ENCODE measurements at regions of chr9 and their contacts with region 1.

Region 1: GRCh38 chr9:126985870-126986498 is 71.4 kb downstream of the RALGPS1 start:
- DNase-seq: peak; percentile 71 to 97 (median 81)
- ATAC-seq: peak; percentile 81
- H3K4me3 ChIP-seq: peak overlapping the region; percentile 12
- H3K4me3 Mint-ChIP-seq: peak overlapping the region; percentile 65
- H3K27ac ChIP-seq: no peak overlapping the region
- H3K27ac Mint-ChIP-seq: peak overlapping the region; percentile 80
- H3K4me1 ChIP-seq: peaks cover 61% of the 10 kb centered on the region
- H3K4me1 Mint-ChIP-seq: peaks cover 59% of the 10 kb centered on the region
- H3K27me3 ChIP-seq: peaks cover 24 to 29% of the 10 kb centered on the region in 2 experiments
- H3K27me3 Mint-ChIP-seq: peaks cover 88% of the 10 kb centered on the region
- CTCF ChIP-seq: peak; percentile 22

Region 2: GRCh38 chr9:126939821-126940221 is 46.2 kb before region 1 on chr9:
- CTCF ChIA-PET with region 1: interaction called, 10 read pairs
- POLR2A ChIA-PET with region 1: interaction called, 5 read pairs
- intact Hi-C with region 1: no loop called
- DNase-seq: no peak
- ATAC-seq: no peak
- H3K4me3 ChIP-seq: no peak overlapping the region
- H3K4me3 Mint-ChIP-seq: no peak overlapping the region
- H3K27ac ChIP-seq: no peak overlapping the region
- H3K27ac Mint-ChIP-seq: no peak overlapping the region
- H3K4me1 ChIP-seq: peaks cover 2% of the 10 kb centered on the region
- H3K4me1 Mint-ChIP-seq: peaks cover 6% of the 10 kb centered on the region
- H3K27me3 ChIP-seq: peaks cover 3 to 4% of the 10 kb centered on the region in 2 experiments
- H3K27me3 Mint-ChIP-seq: peaks cover 13% of the 10 kb centered on the region
- CTCF ChIP-seq: no peak

Region 3: DNA sequence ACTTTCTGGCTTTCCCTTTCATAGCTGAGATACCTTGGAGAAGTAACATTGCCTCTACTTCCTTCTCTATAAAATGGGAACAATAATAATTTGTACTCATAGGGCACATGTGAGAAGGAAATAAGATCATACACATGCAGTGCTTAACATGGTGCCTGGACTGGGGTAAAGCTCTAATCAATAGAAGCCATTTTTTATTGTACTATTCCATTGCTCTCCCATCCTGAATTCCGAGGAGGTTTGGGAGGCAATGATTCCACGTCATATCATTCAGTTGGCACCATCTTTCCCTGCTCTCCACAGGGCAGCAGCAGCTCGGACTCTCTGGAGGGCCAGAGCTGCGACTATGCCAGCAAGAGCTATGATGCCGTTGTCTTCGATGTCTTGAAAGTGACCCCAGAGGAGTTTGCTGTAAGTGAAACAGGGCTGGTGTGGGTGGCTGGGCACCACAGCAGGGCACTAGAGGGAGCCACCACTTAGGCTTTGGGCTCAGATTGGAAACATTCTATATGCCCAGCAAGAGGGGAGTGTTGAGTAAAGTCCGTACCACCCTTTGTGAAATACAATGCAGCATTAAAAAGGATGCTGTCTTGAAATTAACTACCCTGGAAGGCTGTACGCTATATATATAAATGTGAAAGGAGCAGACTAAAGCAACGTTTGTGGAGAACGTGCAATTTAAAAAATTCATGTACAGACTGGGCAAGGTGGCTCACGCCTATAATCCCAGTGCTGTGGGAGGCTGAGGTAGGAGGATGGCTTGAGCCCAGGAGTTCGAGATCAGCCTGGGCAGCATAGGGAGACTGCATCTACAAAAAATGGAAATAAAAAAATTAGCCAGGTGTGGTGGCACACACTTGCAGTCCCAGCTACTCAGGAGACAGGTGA is 20.2 kb before region 1 on chr9:
- CTCF ChIA-PET with region 1: no interaction called
- POLR2A ChIA-PET with region 1: no interaction called
- intact Hi-C with region 1: no loop called
- DNase-seq: peak; percentile 27 to 73 (median 40)
- ATAC-seq: peak; percentile 69
- H3K4me3 ChIP-seq: no peak overlapping the region
- H3K4me3 Mint-ChIP-seq: no peak overlapping the region
- H3K27ac ChIP-seq: no peak overlapping the region
- H3K27ac Mint-ChIP-seq: no peak overlapping the region
- H3K4me1 ChIP-seq: no peaks in the 10 kb centered on the region
- H3K4me1 Mint-ChIP-seq: no peaks in the 10 kb centered on the region
- H3K27me3 ChIP-seq: no peaks in the 10 kb centered on the region
- H3K27me3 Mint-ChIP-seq: peaks cover 30% of the 10 kb centered on the region
- CTCF ChIP-seq: peak; percentile 71

Region 4: DNA sequence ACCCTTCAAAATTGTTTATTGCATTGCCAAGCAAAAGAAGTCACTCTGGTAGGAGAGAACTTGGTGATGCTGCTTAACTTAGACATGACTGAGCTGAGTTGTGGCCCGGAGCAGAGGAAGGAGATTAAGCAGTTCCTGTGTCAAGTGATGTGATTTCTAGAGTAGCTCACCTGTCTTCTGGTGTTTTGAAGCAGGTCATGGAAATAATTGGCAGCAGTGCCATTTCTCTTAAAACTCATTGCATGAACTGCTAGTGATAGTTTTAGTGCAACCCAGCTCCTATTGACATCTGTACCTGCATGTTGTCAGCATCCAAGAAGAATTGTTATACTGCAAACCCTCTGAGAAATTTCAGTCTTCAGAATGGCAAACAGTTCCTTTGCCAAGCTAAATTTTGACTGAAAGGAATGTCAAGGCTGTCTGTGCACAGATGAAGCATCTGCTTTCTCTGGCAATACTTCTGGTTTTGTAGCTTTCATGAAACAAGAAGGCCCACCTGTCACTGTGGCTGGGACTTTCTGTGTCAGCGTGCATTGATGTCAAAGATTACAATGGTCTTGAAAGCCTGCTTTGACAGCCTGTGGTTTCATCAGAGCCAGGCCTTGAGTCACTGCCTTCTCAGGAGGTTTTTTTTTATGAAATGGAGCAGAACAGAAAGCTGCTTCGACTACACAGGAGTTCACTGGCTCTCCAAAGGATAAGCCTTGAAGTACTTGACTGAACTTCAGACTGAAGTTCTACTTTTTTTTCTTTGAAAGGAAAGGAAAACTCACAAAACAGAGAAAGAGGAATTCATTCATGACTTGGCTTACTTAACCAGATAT is 19.2 kb after region 1 on chr9:
- CTCF ChIA-PET with region 1: interaction called, 11 read pairs
- POLR2A ChIA-PET with region 1: interaction called, 27 read pairs
- intact Hi-C with region 1: loop called in 1 of 2 experiments (anchors 1 kb)
- DNase-seq: peak; percentile 41 to 89 (median 58)
- ATAC-seq: peak; percentile 91
- H3K4me3 ChIP-seq: no peak overlapping the region
- H3K4me3 Mint-ChIP-seq: peak overlapping the region; percentile 17
- H3K27ac ChIP-seq: peak overlapping the region in 1 of 2 donors; percentile 24
- H3K27ac Mint-ChIP-seq: peak overlapping the region; percentile 60
- H3K4me1 ChIP-seq: peaks cover 18% of the 10 kb centered on the region
- H3K4me1 Mint-ChIP-seq: peaks cover 19% of the 10 kb centered on the region
- H3K27me3 ChIP-seq: no peaks in the 10 kb centered on the region
- H3K27me3 Mint-ChIP-seq: peaks cover 31% of the 10 kb centered on the region
- CTCF ChIP-seq: no peak

Region 5: DNA sequence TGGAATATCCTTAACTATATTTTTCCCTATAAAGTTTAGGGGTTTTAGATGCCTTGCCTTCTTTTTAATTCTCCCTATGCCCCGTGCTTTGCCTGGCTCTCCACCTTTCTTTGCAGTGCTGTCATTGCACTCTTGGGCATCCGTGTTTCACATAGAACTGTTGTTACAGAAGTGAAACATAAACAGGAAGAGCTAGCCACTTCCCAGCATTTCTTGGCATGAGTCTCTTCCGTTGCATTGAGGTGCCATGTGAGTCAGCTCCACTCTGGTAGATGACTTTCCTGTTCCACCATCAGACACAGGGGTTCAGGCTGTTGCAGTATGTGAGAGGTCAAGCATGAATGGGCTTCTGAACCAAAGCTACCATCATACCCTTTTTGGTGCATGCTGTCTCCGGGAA is 63.1 kb after region 1 on chr9:
- CTCF ChIA-PET with region 1: no interaction called
- POLR2A ChIA-PET with region 1: no interaction called
- intact Hi-C with region 1: loop called in 1 of 2 experiments (anchors 5 kb)
- DNase-seq: peak in 7 of 14 experiments; percentile 7 to 74 (median 44)
- ATAC-seq: peak; percentile 73
- H3K4me3 ChIP-seq: peak overlapping the region; percentile 0
- H3K4me3 Mint-ChIP-seq: peak overlapping the region; percentile 15
- H3K27ac ChIP-seq: no peak overlapping the region
- H3K27ac Mint-ChIP-seq: no peak overlapping the region
- H3K4me1 ChIP-seq: peaks cover 21% of the 10 kb centered on the region
- H3K4me1 Mint-ChIP-seq: peaks cover 24% of the 10 kb centered on the region
- H3K27me3 ChIP-seq: no peaks in the 10 kb centered on the region
- H3K27me3 Mint-ChIP-seq: no peaks in the 10 kb centered on the region
- CTCF ChIP-seq: peak; percentile 4

Region 6: DNA sequence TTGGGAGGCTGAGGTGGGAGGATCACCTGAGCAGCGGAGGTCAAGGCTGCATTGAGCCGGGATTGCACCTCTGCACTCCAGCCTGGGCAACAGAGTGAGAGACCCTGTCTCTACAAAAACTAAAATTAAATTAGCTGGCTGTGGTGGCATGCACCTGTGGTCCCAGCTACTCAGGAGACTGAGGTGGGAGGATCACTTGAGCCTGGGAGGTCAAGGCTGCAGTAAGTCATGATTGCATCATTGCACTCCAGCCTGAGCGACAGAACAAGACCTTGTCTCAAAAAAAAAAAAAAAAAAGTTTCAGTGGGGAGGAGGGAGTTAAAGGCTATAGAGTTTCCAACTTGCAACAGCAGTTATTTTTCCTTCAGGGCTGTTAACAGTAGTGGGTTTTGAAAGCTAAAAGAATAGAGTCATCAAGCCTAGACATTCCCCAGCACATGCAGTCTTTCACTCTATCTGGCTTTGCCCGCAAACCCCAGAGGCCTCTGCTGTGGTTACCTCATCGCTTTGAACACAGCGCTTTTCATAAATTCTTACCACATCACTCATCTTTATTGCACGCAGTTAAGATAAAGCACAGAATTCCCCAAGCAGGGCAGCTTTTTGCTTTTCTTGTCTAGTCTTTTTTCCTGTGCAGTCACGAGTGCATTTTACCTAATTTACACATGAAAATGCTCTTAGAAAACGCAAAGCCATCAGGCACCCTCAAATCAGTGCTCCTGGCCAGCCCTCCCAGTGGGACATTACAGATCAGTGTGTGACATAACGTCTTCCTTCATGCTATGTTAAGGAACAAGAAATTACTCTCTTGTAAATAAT is 402.3 kb after region 1 on chr9:
- CTCF ChIA-PET with region 1: no interaction called
- POLR2A ChIA-PET with region 1: interaction called, 9 read pairs
- intact Hi-C with region 1: loop called (anchors 1 to 5 kb)
- DNase-seq: peak; percentile 75 to 96 (median 82)
- ATAC-seq: peak; percentile 96
- H3K4me3 ChIP-seq: no peak overlapping the region
- H3K4me3 Mint-ChIP-seq: peak overlapping the region; percentile 42
- H3K27ac ChIP-seq: no peak overlapping the region
- H3K27ac Mint-ChIP-seq: peak overlapping the region; percentile 37
- H3K4me1 ChIP-seq: peaks cover 23% of the 10 kb centered on the region
- H3K4me1 Mint-ChIP-seq: peaks cover 26% of the 10 kb centered on the region
- H3K27me3 ChIP-seq: peaks cover 69 to 75% of the 10 kb centered on the region in 2 experiments
- H3K27me3 Mint-ChIP-seq: peaks cover 86% of the 10 kb centered on the region
- CTCF ChIP-seq: no peak

Measured in CD4-positive, alpha-beta T cell (primary cell).